Activated naive CD4-positive, alpha-beta T cell treated with anti-CD3 and anti-CD28 coated beads for 36 hours (primary cell): ENCODE measurements at regions of chr6 and their contacts with region 1.

Region 1: GRCh38 chr6:138588805-138589434 is 89.6 kb upstream of the NHSL1 start:
- DNase-seq: peak; percentile 73
- H3K4me3 Mint-ChIP-seq: no peak overlapping the region
- H3K27ac Mint-ChIP-seq: no peak overlapping the region
- H3K4me1 Mint-ChIP-seq: peaks cover 29% of the 10 kb centered on the region
- H3K27me3 Mint-ChIP-seq: no peaks in the 10 kb centered on the region

Region 2: DNA sequence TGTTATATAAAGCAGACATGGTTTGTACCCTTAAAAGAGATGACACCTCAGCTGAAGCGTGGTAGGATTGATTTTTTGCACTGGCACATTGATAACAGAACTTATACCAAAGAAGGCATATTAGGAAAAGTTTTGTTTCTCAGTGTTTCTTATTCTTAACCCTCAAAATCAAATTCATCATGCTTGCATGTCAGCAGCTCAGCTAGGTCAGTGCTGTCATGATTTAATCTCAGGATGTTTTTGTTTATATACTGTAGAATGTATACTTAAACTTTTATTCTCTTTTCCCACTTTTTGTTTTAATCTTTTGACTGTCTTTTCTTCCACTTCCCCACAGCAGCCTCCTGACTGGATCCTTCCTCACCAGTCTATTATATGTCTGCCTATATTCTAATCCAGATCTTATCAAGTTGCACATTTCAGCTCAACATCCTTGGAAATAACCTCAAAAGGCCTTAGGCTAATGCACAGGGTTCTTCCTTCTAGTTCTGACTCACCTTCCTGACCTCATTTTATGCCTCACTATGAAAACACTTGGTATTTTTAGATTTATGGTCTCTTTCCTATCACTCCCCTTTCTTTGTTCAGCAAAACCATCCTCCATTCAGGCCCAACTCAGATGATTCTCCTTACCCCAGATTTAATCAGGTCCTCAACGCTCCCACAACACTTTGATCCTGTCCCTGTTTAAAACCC is 177.8 kb before region 1 on chr6:
- CTCF ChIA-PET with region 1: no interaction called
- intact Hi-C with region 1: loop called (anchors 1 kb)
- DNase-seq: peak; percentile 31
- H3K4me3 Mint-ChIP-seq: peak overlapping the region; percentile 1
- H3K27ac Mint-ChIP-seq: peak overlapping the region; percentile 84
- H3K4me1 Mint-ChIP-seq: peaks cover 32% of the 10 kb centered on the region
- H3K27me3 Mint-ChIP-seq: no peaks in the 10 kb centered on the region

Region 3: DNA sequence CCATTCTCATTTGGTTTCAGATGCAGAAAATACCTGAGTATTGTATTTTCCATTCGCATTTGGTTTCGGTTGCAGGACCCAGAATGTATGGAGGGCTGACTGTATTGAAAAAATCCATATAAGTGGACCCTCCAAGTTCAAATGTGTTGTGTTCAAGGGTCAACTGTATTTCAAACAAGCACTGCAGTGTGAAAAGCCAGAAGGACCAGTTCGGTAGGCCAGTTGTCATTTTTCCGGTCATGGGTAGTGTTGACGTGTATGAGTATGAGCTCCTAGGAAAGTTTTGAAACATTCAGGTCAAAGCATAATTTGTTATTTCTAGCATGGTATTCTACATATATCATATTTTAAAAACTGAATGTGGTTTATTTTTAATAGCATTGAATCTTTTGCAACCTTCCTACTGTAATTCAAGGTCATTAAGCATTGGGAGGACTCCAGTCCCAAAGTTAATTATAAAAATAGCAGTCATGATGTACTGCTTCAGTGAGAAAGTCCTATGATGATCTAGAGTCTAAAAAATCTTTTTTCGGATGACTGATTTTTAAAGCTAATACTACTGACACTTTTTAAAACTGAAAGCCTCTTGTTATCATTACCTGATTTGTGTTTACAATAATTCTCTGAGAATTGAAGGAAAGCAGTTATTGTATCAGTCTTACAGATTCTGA is 108.5 kb before region 1 on chr6:
- CTCF ChIA-PET with region 1: no interaction called
- intact Hi-C with region 1: no loop called
- DNase-seq: no peak
- H3K4me3 Mint-ChIP-seq: no peak overlapping the region
- H3K27ac Mint-ChIP-seq: no peak overlapping the region
- H3K4me1 Mint-ChIP-seq: no peaks in the 10 kb centered on the region
- H3K27me3 Mint-ChIP-seq: no peaks in the 10 kb centered on the region

Region 4: GRCh38 chr6:138546733-138547185 is 42.2 kb before region 1 on chr6:
- CTCF ChIA-PET with region 1: interaction called, 3 read pairs
- intact Hi-C with region 1: loop called (anchors 1 kb)
- DNase-seq: peak; percentile 57
- H3K4me3 Mint-ChIP-seq: no peak overlapping the region
- H3K27ac Mint-ChIP-seq: no peak overlapping the region
- H3K4me1 Mint-ChIP-seq: peaks cover 6% of the 10 kb centered on the region
- H3K27me3 Mint-ChIP-seq: peaks cover 10% of the 10 kb centered on the region

Region 5: GRCh38 chr6:138569970-138570722 is 18.8 kb before region 1 on chr6:
- CTCF ChIA-PET with region 1: no interaction called
- intact Hi-C with region 1: no loop called
- DNase-seq: no peak
- H3K4me3 Mint-ChIP-seq: no peak overlapping the region
- H3K27ac Mint-ChIP-seq: no peak overlapping the region
- H3K4me1 Mint-ChIP-seq: peaks cover 3% of the 10 kb centered on the region
- H3K27me3 Mint-ChIP-seq: peaks cover 15% of the 10 kb centered on the region

Region 6: DNA sequence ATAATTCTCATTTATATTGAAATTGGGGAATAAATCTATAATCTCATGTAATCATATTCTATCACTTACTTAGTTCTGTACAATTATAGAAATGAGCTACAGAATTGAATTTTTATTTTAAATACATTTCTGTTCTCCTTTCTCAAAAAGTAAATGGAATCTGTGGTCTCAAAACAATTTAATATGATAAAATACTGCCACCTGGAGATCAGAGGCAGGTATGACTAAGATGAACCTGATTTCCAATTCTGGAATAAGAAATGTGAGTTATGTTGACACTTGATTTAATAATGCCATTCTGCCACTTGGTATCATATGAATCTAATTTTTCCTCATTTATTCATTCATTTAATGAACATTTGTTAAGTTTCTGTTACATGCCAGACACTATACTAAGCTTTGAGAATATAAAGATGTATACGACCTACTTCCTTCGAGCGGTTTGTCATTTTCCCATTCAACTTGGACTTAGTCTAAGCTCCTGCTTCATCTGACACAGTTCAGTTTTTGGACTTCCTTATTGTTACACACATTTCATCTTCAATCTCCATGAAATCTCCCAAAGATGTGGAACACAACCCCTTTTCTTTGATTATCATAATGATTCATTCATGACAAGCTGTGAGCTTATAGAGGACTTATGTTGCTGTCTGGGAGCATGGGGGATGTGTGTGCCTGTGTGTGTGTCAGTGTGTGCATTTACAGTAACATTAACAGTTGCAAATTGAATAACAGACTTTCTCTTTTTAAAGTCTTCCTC is 177.2 kb after region 1 on chr6:
- CTCF ChIA-PET with region 1: interaction called, 196 read pairs
- intact Hi-C with region 1: loop called (anchors 1 kb)
- DNase-seq: no peak
- H3K4me3 Mint-ChIP-seq: no peak overlapping the region
- H3K27ac Mint-ChIP-seq: no peak overlapping the region
- H3K4me1 Mint-ChIP-seq: peaks cover 16% of the 10 kb centered on the region
- H3K27me3 Mint-ChIP-seq: no peaks in the 10 kb centered on the region

Region 7: GRCh38 chr6:138863321-138863720 is 274.4 kb after region 1 on chr6:
- CTCF ChIA-PET with region 1: no interaction called
- intact Hi-C with region 1: no loop called
- DNase-seq: no peak
- H3K4me3 Mint-ChIP-seq: no peak overlapping the region
- H3K27ac Mint-ChIP-seq: no peak overlapping the region
- H3K4me1 Mint-ChIP-seq: no peaks in the 10 kb centered on the region
- H3K27me3 Mint-ChIP-seq: peaks cover 13% of the 10 kb centered on the region

Region 8: GRCh38 chr6:138987640-138988468 is 398.9 kb after region 1 on chr6 and contains the start of gene REPS1:
- CTCF ChIA-PET with region 1: no interaction called
- intact Hi-C with region 1: loop called (anchors 1 kb)
- DNase-seq: peak; percentile 92
- H3K4me3 Mint-ChIP-seq: peak within 1 kb of the TSS; percentile 86
- H3K27ac Mint-ChIP-seq: peak within 1 kb of the TSS; percentile 89
- H3K4me1 Mint-ChIP-seq: peaks cover 4% of the 10 kb centered on the region
- H3K27me3 Mint-ChIP-seq: no peaks in the 10 kb centered on the region
- total RNA-seq, gene REPS1: 25.8 to 28.8 TPM

Region 9: DNA sequence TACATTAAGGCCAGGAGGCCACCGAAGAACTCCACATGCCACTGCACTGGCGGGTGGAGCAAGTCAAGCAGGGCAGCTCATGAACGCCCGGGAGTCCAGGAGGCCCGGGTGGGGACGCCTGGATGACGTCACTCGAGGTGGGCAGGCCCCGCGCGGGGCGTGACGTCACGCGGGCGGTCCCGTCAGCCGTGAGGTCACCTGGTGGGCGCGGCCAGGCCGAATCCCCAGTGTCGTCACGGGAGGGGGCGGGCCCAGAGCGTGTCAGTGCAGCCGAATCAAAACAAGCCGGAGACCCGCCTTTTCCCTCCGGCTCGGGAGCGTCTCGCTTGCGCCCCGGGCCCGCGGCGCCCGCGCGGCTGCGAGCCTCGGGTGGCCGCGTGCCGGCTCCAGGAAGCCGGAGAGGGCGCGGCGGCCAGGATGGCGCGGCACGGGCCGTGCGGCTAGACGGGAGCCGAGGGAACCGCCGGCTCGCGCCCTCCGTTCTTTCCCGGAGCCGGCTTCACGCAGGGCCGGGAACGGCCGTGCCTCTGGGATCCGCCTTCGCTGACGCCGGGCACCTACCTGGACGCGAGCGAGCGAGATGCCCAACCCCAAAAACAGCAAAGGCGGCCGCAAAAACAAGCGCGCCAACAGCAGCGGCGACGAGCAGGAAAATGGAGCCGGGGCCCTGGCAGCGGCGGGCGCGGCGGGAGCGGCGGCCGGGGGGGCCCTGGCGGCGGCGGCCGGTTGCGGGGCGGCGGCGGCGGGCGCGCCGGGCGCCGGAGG is 546.1 kb after region 1 on chr6 and contains the start of gene HECA:
- CTCF ChIA-PET with region 1: no interaction called
- intact Hi-C with region 1: loop called (anchors 10 kb)
- DNase-seq: peak; percentile 99
- H3K4me3 Mint-ChIP-seq: peak within 1 kb of the TSS; percentile 95
- H3K27ac Mint-ChIP-seq: peak within 1 kb of the TSS; percentile 99
- H3K4me1 Mint-ChIP-seq: peaks cover 49% of the 10 kb centered on the region
- H3K27me3 Mint-ChIP-seq: no peaks in the 10 kb centered on the region
- total RNA-seq, gene HECA: 61.1 to 61.2 TPM

Region 10: GRCh38 chr6:139375232-139376016 is 786.5 kb after region 1 on chr6:
- CTCF ChIA-PET with region 1: no interaction called
- intact Hi-C with region 1: loop called (anchors 2 kb)
- DNase-seq: peak; percentile 80
- H3K4me3 Mint-ChIP-seq: peak overlapping the region; percentile 96
- H3K27ac Mint-ChIP-seq: peak overlapping the region; percentile 93
- H3K4me1 Mint-ChIP-seq: peaks cover 31% of the 10 kb centered on the region
- H3K27me3 Mint-ChIP-seq: no peaks in the 10 kb centered on the region